CD8-positive, alpha-beta T cell (primary cell): ENCODE measurements at regions of chr12 and their contacts with region 1.

Region 1: GRCh38 chr12:8078398-8078797 is 3.7 kb upstream of the NECAP1 start:
- DNase-seq: peak; percentile 27 to 87 (median 65)
- ATAC-seq: peak; percentile 27
- H3K4me3 ChIP-seq: no peak overlapping the region
- H3K4me3 Mint-ChIP-seq: no peak overlapping the region
- H3K27ac ChIP-seq: no peak overlapping the region
- H3K27ac Mint-ChIP-seq: peak overlapping the region; percentile 97
- H3K4me1 ChIP-seq: peaks cover 26% of the 10 kb centered on the region
- H3K4me1 Mint-ChIP-seq: peaks cover 48% of the 10 kb centered on the region
- H3K27me3 ChIP-seq: no peaks in the 10 kb centered on the region
- H3K27me3 Mint-ChIP-seq: no peaks in the 10 kb centered on the region
- CTCF ChIP-seq: peak; percentile 79

Region 2: DNA sequence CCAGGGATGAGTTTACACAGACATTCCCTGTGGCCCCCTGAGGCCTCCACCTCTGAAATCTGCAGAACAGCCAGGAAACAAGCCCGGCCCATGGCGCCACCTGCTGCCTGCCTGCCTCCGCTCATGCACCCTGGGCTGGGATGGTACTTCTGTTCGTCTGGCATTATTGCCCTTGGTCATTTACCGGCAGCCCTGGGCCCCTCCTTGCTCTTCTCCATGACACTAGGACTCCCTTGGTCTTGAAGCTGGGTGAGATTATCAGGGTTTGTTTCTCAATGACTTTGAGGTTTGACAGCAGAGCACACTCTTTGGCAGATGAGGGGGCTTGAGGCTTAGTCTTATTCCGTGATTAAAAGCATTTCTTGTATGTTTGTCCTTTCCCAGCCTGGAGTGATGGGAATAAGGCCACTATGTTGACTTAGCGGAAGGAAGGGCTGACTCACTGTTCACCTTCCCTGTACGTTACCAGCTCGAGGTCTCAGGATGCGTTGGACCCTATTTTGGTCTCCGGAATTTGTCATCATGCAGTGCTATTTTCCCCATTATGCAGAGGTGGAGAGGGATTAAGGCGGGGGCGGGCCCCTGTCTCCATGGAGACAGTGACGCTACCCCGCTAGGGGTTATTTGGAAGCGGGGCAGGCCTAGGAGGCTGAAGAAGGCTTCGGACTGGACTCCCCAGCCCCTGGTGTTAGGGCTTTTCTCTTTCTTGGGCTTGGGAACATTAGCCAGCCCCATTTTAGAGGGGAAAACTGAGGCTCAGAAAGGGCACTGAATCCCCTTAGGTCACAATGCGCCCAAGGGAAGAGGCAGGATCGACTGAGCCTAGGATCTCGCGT is 889.6 kb before region 1 on chr12:
- CTCF ChIA-PET with region 1: no interaction called
- POLR2A ChIA-PET with region 1: no interaction called
- intact Hi-C with region 1: loop called (anchors 5 to 10 kb)
- DNase-seq: peak; percentile 36 to 76 (median 63)
- ATAC-seq: peak; percentile 32
- H3K4me3 ChIP-seq: peak overlapping the region; percentile 85 to 86
- H3K4me3 Mint-ChIP-seq: peak overlapping the region; percentile 95
- H3K27ac ChIP-seq: peak overlapping the region; percentile 66 to 90
- H3K27ac Mint-ChIP-seq: peak overlapping the region; percentile 97
- H3K4me1 ChIP-seq: peaks cover 26% of the 10 kb centered on the region
- H3K4me1 Mint-ChIP-seq: peaks cover 44% of the 10 kb centered on the region
- H3K27me3 ChIP-seq: no peaks in the 10 kb centered on the region
- H3K27me3 Mint-ChIP-seq: no peaks in the 10 kb centered on the region
- CTCF ChIP-seq: peak; percentile 63

Region 3: DNA sequence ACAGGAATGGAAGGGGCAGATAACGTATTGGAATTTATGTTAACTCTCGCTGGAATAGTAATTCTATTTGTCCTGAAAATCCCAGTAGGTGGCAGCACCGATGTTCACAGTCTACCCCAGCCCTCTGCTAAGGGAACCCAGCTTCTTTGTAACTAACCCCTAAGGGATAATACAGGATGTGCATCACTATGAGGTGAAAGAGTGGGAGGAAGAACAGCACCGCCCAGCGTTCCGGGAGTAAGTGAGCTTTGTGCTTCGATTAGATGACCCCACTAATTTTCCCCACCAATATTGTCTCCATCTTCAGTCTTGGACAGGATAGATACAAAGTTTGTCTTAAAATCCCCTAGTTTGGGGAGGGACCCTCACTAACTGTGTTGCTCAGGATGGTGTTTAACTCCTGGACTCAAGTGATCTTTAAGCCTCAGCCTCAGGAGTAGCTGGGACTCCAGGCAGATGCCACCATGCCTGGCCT is 145.1 kb before region 1 on chr12:
- CTCF ChIA-PET with region 1: interaction called, 13 read pairs
- POLR2A ChIA-PET with region 1: interaction called, 4 read pairs
- intact Hi-C with region 1: loop called (anchors 1 to 2 kb)
- DNase-seq: peak; percentile 52 to 97 (median 77)
- ATAC-seq: peak; percentile 74
- H3K4me3 ChIP-seq: peak overlapping the region; percentile 75 to 76
- H3K4me3 Mint-ChIP-seq: no peak overlapping the region
- H3K27ac ChIP-seq: peak overlapping the region; percentile 81 to 82
- H3K27ac Mint-ChIP-seq: no peak overlapping the region
- H3K4me1 ChIP-seq: peaks cover 35% of the 10 kb centered on the region
- H3K4me1 Mint-ChIP-seq: peaks cover 29% of the 10 kb centered on the region
- H3K27me3 ChIP-seq: no peaks in the 10 kb centered on the region
- H3K27me3 Mint-ChIP-seq: no peaks in the 10 kb centered on the region
- CTCF ChIP-seq: peak; percentile 74

Region 4: DNA sequence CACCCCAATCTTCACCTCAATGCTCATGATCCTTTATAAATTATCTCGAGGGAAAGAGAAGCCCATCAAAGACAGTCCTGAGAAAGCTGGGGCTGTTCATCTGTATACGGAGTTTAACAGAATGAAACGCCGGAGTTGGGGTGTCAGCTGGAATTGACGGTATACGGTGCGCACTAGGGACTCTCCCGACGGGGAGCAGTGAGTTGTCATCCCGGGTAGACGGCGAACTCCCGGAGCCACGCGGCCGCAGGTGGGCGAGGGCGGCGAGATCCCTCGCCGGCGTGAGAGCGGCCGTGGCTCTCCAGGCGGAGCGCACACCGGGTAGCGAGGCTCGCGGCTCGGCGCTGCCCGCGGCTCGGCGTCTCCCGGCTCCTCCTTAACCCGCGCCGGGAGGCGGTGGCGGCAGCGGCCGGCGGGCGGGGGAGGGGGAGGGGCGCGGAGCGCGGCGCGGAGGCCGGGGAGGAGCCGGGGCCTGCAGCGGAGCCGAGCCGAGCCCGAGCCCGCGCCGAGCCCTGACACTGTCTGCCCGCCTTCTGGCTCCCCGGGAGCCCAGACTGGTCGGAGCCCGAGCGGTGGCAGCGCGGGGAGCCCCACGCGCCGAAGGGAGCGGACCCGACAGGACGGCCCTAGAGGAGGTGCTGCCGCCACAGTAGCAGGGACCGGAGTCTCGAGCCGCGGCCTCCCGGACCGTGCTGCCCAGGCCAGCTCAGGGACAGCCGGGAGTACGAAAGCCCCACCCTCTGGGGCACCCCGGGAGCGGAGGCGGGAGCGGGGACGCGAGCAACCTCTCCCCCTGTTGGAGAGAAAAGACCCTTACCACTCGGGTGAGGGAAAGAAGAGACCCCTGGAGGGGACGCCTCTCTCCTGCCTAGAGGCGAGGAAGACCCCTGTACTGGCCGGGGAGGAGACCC is 45.9 kb before region 1 on chr12 and contains the start of gene FOXJ2:
- CTCF ChIA-PET with region 1: interaction called, 22 read pairs
- POLR2A ChIA-PET with region 1: interaction called, 11 read pairs
- intact Hi-C with region 1: loop called (anchors 1 kb)
- DNase-seq: peak; percentile 70 to 90 (median 77)
- ATAC-seq: peak; percentile 84
- H3K4me3 ChIP-seq: peak within 1 kb of the TSS; percentile 89 to 94
- H3K4me3 Mint-ChIP-seq: peak within 1 kb of the TSS; percentile 88
- H3K27ac ChIP-seq: peak within 1 kb of the TSS; percentile 84 to 86
- H3K27ac Mint-ChIP-seq: peak within 1 kb of the TSS; percentile 90
- H3K4me1 ChIP-seq: peaks cover 47% of the 10 kb centered on the region
- H3K4me1 Mint-ChIP-seq: peaks cover 51% of the 10 kb centered on the region
- H3K27me3 ChIP-seq: no peaks in the 10 kb centered on the region
- H3K27me3 Mint-ChIP-seq: no peaks in the 10 kb centered on the region
- CTCF ChIP-seq: no peak
- total RNA-seq, gene FOXJ2: 38.9 to 39.3 TPM

Region 5: GRCh38 chr12:8045952-8046944 is 32.1 kb before region 1 on chr12:
- CTCF ChIA-PET with region 1: interaction called, 278 read pairs
- POLR2A ChIA-PET with region 1: interaction called, 5 read pairs
- intact Hi-C with region 1: loop called (anchors 1 kb)
- DNase-seq: peak; percentile 69 to 90 (median 84)
- ATAC-seq: peak; percentile 94
- H3K4me3 ChIP-seq: no peak overlapping the region
- H3K4me3 Mint-ChIP-seq: no peak overlapping the region
- H3K27ac ChIP-seq: no peak overlapping the region
- H3K27ac Mint-ChIP-seq: no peak overlapping the region
- H3K4me1 ChIP-seq: no peaks in the 10 kb centered on the region
- H3K4me1 Mint-ChIP-seq: peaks cover 7% of the 10 kb centered on the region
- H3K27me3 ChIP-seq: no peaks in the 10 kb centered on the region
- H3K27me3 Mint-ChIP-seq: no peaks in the 10 kb centered on the region
- CTCF ChIP-seq: peak; percentile 77

Region 6: DNA sequence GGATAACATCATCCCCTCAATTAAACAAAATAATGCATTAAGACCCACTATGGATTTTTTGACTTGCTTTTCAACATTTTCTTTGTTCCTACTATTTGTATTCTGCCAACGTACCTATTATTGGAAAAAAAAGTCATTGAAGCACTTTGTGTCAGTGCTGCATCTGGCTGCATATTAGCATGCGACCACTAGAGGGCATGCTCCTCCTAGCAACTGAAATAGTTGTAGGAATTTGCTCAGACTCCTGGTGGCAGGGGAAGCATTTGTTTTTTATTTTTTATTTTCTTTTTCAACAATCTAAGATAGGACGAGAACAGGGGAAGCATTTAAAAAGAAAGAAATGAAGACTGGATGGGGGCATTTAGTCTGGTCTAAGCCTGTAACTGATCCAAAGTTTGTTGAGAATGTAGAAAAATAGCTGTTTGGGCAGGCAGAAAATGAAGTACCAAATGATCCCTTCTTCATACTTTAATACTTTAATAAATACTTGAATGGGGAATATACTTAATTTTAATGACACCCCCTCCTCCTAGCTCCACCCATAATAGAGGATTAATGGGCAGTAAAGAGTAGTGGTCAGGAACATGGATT is 30.5 kb after region 1 on chr12:
- CTCF ChIA-PET with region 1: interaction called, 5 read pairs
- POLR2A ChIA-PET with region 1: no interaction called
- intact Hi-C with region 1: loop called in 1 of 2 experiments (anchors 2 kb)
- DNase-seq: peak; percentile 54 to 84 (median 79)
- ATAC-seq: peak; percentile 87
- H3K4me3 ChIP-seq: no peak overlapping the region
- H3K4me3 Mint-ChIP-seq: no peak overlapping the region
- H3K27ac ChIP-seq: no peak overlapping the region
- H3K27ac Mint-ChIP-seq: no peak overlapping the region
- H3K4me1 ChIP-seq: no peaks in the 10 kb centered on the region
- H3K4me1 Mint-ChIP-seq: peaks cover 5% of the 10 kb centered on the region
- H3K27me3 ChIP-seq: no peaks in the 10 kb centered on the region
- H3K27me3 Mint-ChIP-seq: no peaks in the 10 kb centered on the region
- CTCF ChIP-seq: peak; percentile 99

Region 7: GRCh38 chr12:8449293-8449945 is 371.0 kb after region 1 on chr12:
- CTCF ChIA-PET with region 1: no interaction called
- POLR2A ChIA-PET with region 1: no interaction called
- intact Hi-C with region 1: no loop called
- DNase-seq: peak in 1 of 9 experiments; percentile 18
- ATAC-seq: no peak
- H3K4me3 ChIP-seq: no peak overlapping the region
- H3K4me3 Mint-ChIP-seq: no peak overlapping the region
- H3K27ac ChIP-seq: no peak overlapping the region
- H3K27ac Mint-ChIP-seq: no peak overlapping the region
- H3K4me1 ChIP-seq: no peaks in the 10 kb centered on the region
- H3K4me1 Mint-ChIP-seq: no peaks in the 10 kb centered on the region
- H3K27me3 ChIP-seq: no peaks in the 10 kb centered on the region
- H3K27me3 Mint-ChIP-seq: peaks cover 2% of the 10 kb centered on the region
- CTCF ChIP-seq: no peak